ENCODE measurements at regions of chr12 and their contacts with region 1.

Region 1: GRCh38 chr12:50283229-50283923 is at the start of gene LIMA1:
- DNase-seq: peak; percentile 90 to 93
- ATAC-seq: peak; percentile 99 to 100 (median 100)
- H3K4me3 ChIP-seq: peak within 1 kb of the TSS; percentile 70 to 97 (median 94)
- H3K27ac ChIP-seq: peak within 1 kb of the TSS; percentile 42 to 92 (median 85)
- H3K4me1 ChIP-seq: peaks cover 0 to 40% (median 26%) of the 10 kb centered on the region in 9 donors
- H3K27me3 ChIP-seq: no peaks in the 10 kb centered on the region
- CTCF ChIP-seq: peak in 4 of 9 donors; percentile 27 to 55 (median 52)
- total RNA-seq, gene LIMA1: 13.8 to 26.0 (median 16.2) TPM

Region 2: DNA sequence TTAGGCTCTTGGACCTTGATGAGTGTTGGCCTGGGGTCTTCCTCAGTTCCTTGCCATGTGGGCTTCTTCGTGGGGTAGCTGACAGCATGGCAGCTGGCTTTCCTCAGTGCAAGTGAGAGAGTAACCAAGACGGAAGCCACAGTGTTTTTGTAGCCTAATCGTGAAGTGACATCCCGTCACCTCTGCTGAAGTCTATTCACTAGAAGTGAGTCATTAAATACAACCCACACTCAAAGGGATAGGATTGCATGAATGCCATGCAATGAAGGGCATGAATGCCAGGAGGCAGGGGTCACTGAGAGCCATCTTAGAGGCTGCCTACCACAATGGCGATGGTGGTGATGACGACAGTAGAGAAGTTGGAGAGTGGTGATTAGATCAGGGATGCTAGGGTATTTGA is 239.5 kb before region 1 on chr12:
- intact Hi-C with region 1: no loop called
- DNase-seq: no peak
- ATAC-seq: no peak
- H3K4me3 ChIP-seq: no peak overlapping the region
- H3K27ac ChIP-seq: no peak overlapping the region
- H3K4me1 ChIP-seq: no peaks in the 10 kb centered on the region
- H3K27me3 ChIP-seq: peaks cover 0 to 7% (median 0%) of the 10 kb centered on the region in 7 donors
- CTCF ChIP-seq: no peak

Region 3: DNA sequence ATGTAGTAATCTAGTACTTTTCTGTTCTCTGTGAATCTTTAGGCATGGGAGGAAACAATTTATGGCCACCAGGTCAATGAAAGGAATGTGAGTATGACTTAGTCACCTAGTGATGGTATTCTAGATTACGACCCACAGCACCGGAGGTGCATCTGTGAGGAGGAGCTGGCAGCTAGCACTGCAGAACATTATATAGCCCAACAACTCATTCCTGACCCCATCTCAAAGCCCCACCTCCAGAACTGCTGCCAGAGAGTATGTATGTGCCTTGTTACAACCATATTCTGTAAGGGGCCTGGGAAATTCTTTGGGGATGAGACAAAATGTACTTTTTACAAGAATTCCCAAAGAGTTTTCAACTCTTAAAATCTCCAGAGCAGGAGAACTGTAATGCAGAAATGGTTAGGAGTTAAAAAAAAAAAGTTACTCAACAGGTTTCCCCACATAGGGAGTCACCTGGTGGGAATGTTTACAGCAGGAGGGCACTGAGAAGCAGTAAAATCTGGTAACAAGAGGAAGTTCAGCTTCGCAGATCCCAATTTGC is 81.3 kb before region 1 on chr12:
- intact Hi-C with region 1: loop called in 1 of 10 experiments (anchors 10 kb)
- DNase-seq: no peak
- ATAC-seq: no peak
- H3K4me3 ChIP-seq: no peak overlapping the region
- H3K27ac ChIP-seq: no peak overlapping the region
- H3K4me1 ChIP-seq: peaks cover 0 to 10% (median 0%) of the 10 kb centered on the region in 9 donors
- H3K27me3 ChIP-seq: no peaks in the 10 kb centered on the region
- CTCF ChIP-seq: no peak

Region 4: DNA sequence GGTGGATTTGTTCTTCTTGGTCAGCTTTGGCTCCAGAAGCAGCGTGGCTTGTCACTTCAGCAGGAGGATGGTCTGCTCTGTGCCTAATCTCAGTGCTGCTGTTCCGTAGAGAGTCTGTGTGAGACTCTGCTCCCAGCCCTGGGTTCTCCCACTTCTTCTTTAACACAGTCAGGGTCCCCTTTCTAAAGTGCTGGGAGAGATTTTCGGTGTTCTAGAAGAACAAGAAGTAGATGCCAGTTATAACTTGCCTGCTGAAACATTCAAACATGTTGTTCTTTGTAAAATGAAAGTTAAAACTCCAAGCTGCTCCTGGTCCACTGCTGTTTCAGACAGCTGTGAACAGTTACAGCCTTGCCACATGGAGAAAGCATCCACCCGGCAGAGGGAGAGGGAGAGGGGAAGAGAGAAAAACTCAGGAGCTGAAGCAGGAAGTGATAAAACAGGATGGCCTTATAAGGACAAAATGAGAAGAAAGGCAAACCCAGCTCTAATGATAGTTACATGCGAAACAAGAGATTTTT is 61.0 kb before region 1 on chr12:
- intact Hi-C with region 1: loop called in 3 of 10 experiments (anchors 5 to 10 kb)
- DNase-seq: peak in 1 of 2 donors; percentile 69
- ATAC-seq: peak; percentile 79 to 91 (median 87)
- H3K4me3 ChIP-seq: peak overlapping the region; percentile 18 to 58 (median 53)
- H3K27ac ChIP-seq: peak overlapping the region; percentile 43 to 88 (median 78)
- H3K4me1 ChIP-seq: peaks cover 0 to 46% (median 28%) of the 10 kb centered on the region in 9 donors
- H3K27me3 ChIP-seq: no peaks in the 10 kb centered on the region
- CTCF ChIP-seq: peak in 6 of 9 donors; percentile 12 to 53 (median 34)

Region 5: GRCh38 chr12:50234347-50234746 is 49.0 kb before region 1 on chr12:
- intact Hi-C with region 1: loop called in 2 of 10 experiments (anchors 10 kb)
- DNase-seq: no peak
- ATAC-seq: peak in 2 of 8 donors; percentile 17 to 48
- H3K4me3 ChIP-seq: no peak overlapping the region
- H3K27ac ChIP-seq: no peak overlapping the region
- H3K4me1 ChIP-seq: no peaks in the 10 kb centered on the region
- H3K27me3 ChIP-seq: no peaks in the 10 kb centered on the region
- CTCF ChIP-seq: no peak

Region 6: DNA sequence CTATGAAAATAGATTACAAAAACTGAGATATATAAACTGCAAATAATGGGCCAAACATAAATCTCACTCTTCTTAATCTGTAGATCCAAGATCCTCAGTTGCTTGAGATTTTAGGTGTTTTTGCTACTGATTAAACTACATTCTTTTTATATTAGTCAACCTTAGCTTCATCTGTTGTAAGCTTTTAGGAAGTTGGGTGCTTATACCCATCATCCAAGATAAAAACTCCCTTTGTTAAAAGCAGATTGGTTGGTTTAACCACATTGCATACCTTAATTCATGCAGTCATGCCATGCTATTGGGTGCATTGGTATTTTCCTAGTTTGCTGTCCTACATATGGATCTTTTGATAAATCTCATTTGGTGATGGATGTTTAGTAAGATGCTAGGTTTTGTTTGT is 175.2 kb after region 1 on chr12:
- intact Hi-C with region 1: no loop called
- DNase-seq: no peak
- ATAC-seq: no peak
- H3K4me3 ChIP-seq: no peak overlapping the region
- H3K27ac ChIP-seq: no peak overlapping the region
- H3K4me1 ChIP-seq: no peaks in the 10 kb centered on the region
- H3K27me3 ChIP-seq: no peaks in the 10 kb centered on the region
- CTCF ChIP-seq: no peak